ENCODE measurements at regions of chr2 and their contacts with region 1.

Region 1: GRCh38 chr2:60581433-60582282 is 28.2 kb upstream of the BCL11A start:
- DNase-seq: no peak
- H3K4me3 ChIP-seq: peak overlapping the region; percentile 55
- CTCF ChIP-seq: peak; percentile 97

Region 2: DNA sequence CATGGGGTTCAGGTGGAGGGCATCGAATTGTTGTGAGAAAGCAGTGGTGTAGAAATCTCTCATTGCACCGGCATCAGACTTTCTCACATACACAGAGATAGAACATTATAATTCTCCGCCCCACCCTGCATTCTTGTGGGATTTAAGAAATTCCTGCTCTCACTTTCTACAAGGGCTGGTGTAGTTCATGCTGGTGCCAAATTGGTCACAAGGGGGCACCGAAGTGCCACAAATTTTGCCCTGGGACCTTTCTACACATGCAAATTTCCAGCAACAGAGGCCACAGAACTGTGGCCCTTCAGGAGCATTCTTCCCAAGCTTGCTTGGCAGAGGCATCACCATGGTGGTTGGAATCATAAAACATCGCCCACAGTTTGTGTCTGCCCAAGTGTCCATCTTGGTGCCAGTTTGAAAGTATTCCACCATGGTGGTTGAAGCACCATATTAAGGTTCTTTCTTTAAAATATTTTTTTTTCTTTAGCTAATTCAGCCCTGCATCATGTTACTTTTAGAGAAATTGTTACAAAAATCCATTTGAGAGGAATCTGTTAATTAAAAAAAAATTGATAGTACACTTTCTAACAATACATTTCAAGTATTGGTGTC is 1819.4 kb before region 1 on chr2:
- CTCF ChIA-PET with region 1: interaction called, 22 read pairs
- POLR2A ChIA-PET with region 1: no interaction called
- DNase-seq: peak; percentile 23
- H3K4me3 ChIP-seq: no peak overlapping the region
- CTCF ChIP-seq: peak; percentile 66

Region 3: DNA sequence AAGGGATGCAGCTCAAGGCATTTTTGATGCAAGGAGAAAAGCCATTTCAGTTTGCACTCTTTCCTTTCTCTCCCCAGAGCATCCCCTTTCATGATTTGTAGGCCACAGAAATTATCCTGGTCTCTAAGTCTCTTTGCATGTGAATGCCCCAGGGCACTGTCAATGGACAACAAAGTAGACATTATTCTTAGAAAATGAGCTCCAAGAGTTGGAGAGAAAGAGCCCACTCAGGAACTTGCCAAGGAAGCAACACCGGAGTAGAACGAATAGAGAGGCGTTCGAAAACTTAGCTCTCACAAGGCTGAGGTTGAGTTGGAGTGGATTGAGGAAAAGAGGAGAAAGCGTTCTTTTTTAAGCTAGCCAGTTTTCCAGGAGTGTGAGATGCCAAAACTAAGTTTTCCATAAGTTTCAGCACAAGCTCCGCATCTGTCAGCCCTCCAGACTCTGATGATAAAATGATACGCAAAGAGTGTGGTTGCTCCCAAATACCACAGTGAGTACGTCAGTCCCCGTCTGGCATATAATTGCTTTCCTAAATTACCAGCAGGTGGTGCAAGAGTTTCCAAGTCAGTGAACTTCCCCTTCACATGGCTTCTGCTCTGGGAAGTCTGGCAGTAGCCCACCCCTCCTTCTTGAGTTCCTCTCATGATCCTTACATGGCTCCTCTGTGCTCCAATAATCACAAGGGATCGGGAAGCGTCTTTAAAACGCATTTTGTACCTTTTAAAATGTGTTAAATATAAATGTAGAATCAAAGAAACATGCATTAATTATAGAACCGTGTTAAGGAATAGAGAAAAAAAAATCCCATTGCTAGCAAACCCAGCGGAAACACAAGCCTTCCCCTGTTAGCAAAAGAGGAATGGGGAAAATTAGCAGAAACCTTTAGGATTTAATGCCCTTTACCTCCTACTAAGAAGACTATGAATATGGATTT is 1279.9 kb before region 1 on chr2:
- CTCF ChIA-PET with region 1: interaction called, 13 read pairs
- POLR2A ChIA-PET with region 1: no interaction called
- DNase-seq: peak; percentile 31
- H3K4me3 ChIP-seq: no peak overlapping the region
- CTCF ChIP-seq: peak; percentile 55

Region 4: GRCh38 chr2:60550178-60550983 is 31.3 kb before region 1 on chr2:
- CTCF ChIA-PET with region 1: interaction called, 230 read pairs
- POLR2A ChIA-PET with region 1: no interaction called
- DNase-seq: peak; percentile 47
- H3K4me3 ChIP-seq: peak overlapping the region; percentile 75
- CTCF ChIP-seq: peak; percentile 85

Region 5: GRCh38 chr2:60806988-60807681 is 225.5 kb after region 1 on chr2:
- CTCF ChIA-PET with region 1: no interaction called
- POLR2A ChIA-PET with region 1: no interaction called
- DNase-seq: peak; percentile 45
- H3K4me3 ChIP-seq: no peak overlapping the region
- CTCF ChIP-seq: no peak

Measured in AG04449 (cell line).